Heart left ventricle (tissue), 16 donors: ENCODE measurements at regions of chr15 and their contacts with region 1.

Region 1: GRCh38 chr15:26516102-26516980 is 256.5 kb downstream of the GABRB3 start:
- DNase-seq: no peak
- ATAC-seq: no peak
- H3K4me3 ChIP-seq: no peak overlapping the region
- H3K27ac ChIP-seq: no peak overlapping the region
- H3K4me1 ChIP-seq: no peaks in the 10 kb centered on the region
- H3K27me3 ChIP-seq: no peaks in the 10 kb centered on the region
- CTCF ChIP-seq: no peak
- POLR2A ChIP-seq: no peak

Region 2: DNA sequence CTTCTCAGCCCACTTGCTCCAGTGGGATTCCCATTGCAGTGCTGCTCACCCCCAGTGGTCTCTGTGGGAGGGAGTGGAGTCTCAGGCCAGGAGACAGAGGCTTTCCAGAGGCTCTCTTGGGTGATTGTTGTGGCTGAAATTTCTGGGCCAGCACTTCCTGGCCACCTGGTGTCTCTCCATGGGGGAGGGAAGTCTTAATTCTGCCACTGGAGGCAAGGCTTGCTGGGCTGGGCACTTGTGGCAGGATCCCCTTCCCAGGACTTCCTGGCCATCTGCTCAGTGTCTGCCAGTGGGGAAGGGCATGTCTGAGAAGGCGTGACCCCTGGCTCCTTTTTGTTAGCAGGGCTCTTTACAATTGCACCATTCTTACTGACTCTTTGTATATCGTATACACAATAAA is 95.3 kb before region 1 on chr15:
- intact Hi-C with region 1: no loop called
- DNase-seq: no peak
- ATAC-seq: peak in 1 of 4 donors; percentile 41
- H3K4me3 ChIP-seq: no peak overlapping the region
- H3K27ac ChIP-seq: no peak overlapping the region
- H3K4me1 ChIP-seq: no peaks in the 10 kb centered on the region
- H3K27me3 ChIP-seq: no peaks in the 10 kb centered on the region
- CTCF ChIP-seq: no peak
- POLR2A ChIP-seq: no peak

Region 3: DNA sequence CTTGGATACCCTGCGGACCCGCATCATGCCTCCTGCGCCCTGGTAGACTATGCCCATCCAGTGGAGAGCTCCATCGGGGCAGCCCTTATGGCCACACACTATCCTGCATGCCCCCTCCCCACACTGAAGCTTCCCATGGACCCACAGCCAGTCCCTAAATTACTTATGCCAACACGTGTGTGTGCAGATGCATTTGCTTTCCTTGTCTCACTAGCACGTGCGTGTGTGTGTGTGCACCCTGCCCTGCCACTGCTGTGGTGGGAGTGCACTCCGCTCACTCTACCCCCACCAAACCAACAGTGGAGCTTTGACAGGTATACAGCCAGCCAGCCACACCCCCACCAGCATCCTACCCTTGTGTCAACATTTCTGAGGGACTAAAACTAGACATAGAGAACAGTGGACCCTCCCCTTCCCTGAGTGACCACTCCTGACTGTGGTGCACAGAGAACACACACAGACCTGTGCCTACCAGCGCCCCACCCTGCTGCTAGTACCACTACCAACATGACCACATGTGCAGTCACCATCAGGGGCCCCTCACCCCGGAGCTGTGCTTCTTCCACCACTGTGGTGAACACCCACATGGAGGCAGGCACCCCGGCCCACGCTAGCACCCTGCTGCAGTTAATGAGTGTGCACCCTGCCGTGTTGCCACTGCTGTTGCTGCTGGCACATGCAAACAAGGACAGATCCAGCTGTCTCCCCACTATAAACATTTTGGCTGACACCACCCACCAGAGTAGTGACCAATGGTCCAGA is 54.3 kb before region 1 on chr15:
- intact Hi-C with region 1: loop called in 1 of 10 experiments (anchors 10 kb)
- DNase-seq: no peak
- ATAC-seq: no peak
- H3K4me3 ChIP-seq: no peak overlapping the region
- H3K27ac ChIP-seq: no peak overlapping the region
- H3K4me1 ChIP-seq: no peaks in the 10 kb centered on the region
- H3K27me3 ChIP-seq: no peaks in the 10 kb centered on the region
- CTCF ChIP-seq: no peak
- POLR2A ChIP-seq: no peak

Region 4: DNA sequence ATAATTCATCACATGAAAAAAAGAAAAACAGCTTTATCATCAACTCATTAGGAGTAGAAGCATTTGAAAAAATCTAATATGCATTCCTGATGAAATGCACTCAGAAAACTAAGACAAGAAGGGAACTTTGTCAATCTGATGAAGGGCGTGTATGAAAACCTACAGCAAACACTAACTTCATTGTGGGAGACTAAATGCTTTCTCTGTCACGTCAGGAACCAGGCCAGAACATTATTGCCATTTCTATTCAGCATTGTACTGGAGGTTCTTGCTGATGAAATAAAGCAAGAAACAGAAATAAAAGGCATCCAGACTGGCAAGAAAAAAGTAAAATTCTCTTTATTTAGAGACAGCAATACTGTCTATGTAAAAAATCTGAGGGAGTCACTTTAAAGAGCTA is 21.3 kb after region 1 on chr15:
- intact Hi-C with region 1: no loop called
- DNase-seq: no peak
- ATAC-seq: no peak
- H3K4me3 ChIP-seq: no peak overlapping the region
- H3K27ac ChIP-seq: no peak overlapping the region
- H3K4me1 ChIP-seq: no peaks in the 10 kb centered on the region
- H3K27me3 ChIP-seq: no peaks in the 10 kb centered on the region
- CTCF ChIP-seq: no peak
- POLR2A ChIP-seq: no peak